ENCODE measurements at regions of chr1 and their contacts with region 1.

Region 1: GRCh38 chr1:39196244-39197215 is 8.0 kb upstream of the MACF1 start:
- DNase-seq: peak; percentile 82
- ATAC-seq: peak; percentile 47
- H3K4me3 Mint-ChIP-seq: peak overlapping the region; percentile 71
- H3K27ac Mint-ChIP-seq: peak overlapping the region; percentile 98
- H3K4me1 Mint-ChIP-seq: peaks cover 80% of the 10 kb centered on the region
- H3K27me3 Mint-ChIP-seq: no peaks in the 10 kb centered on the region

Region 2: GRCh38 chr1:39110325-39110851 is 86.1 kb before region 1 on chr1:
- CTCF ChIA-PET with region 1: interaction called, 40 read pairs
- POLR2A ChIA-PET with region 1: interaction called, 5 read pairs
- DNase-seq: no peak
- ATAC-seq: no peak
- H3K4me3 Mint-ChIP-seq: no peak overlapping the region
- H3K27ac Mint-ChIP-seq: no peak overlapping the region
- H3K4me1 Mint-ChIP-seq: no peaks in the 10 kb centered on the region
- H3K27me3 Mint-ChIP-seq: peaks cover 2% of the 10 kb centered on the region

Region 3: DNA sequence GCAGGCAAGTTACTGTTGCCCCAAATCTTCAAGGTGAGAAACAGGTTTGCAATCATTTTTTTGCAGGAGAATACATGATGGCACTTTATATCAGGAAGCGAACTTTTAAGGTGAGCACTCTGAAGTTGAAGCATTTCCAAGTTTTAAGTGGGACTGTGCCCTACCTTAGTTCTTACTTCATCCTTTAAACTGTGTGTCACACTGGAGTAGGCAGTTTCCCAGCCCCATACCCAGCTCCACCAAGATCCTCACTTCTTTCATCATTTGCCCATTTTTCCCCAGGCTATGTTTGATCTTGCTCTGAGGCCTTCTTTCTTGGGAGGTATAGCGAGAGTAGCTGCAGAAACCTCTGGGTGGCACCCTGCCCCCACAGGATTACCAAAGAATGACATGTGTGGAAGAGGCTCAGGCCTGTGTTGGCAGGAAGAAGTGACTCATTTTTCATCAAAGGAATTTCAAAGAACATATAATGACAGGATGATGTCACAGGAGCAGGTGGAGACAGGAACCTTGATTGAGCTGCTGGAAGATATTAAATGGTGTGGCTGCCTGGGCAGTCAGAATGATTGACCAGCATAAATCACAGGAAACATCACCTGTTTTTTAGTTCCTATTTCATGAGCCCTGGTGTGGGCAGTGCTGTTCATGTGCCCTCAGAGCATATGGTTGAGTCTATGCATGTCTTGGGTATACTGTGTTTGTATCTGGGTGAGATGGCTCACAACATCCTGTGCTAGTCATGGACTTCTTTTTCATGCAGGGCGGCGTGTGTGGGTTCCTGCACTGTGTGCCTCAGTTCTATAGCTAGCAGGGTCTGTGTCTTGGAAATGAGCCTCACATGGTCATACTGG is 12.8 kb before region 1 on chr1:
- CTCF ChIA-PET with region 1: interaction called, 92 read pairs
- POLR2A ChIA-PET with region 1: interaction called, 6 read pairs
- DNase-seq: peak; percentile 89
- ATAC-seq: peak; percentile 90
- H3K4me3 Mint-ChIP-seq: peak overlapping the region; percentile 1
- H3K27ac Mint-ChIP-seq: peak overlapping the region; percentile 84
- H3K4me1 Mint-ChIP-seq: peaks cover 45% of the 10 kb centered on the region
- H3K27me3 Mint-ChIP-seq: no peaks in the 10 kb centered on the region

Region 4: DNA sequence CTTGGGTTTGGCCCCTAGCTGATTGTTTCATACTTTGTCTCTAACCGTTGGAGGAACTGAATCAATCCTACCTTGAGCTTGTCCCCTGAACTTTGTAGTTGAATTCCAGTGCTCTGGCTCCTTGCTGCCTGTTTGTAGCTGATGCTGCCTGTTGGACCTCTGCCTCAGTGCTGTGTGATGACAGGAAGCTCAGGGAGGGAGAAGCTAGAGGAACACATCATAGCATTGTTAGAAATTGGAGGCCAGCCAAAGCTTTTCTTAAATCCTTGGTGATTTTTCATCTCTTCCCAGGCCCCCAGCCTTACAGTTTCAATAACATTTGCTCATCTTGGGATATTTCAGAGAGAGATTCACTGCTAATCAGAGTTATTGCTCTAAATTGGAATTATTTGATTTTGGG is 41.9 kb after region 1 on chr1:
- CTCF ChIA-PET with region 1: interaction called, 50 read pairs
- POLR2A ChIA-PET with region 1: no interaction called
- DNase-seq: no peak
- ATAC-seq: no peak
- H3K4me3 Mint-ChIP-seq: no peak overlapping the region
- H3K27ac Mint-ChIP-seq: peak overlapping the region; percentile 75
- H3K4me1 Mint-ChIP-seq: peaks cover 8% of the 10 kb centered on the region
- H3K27me3 Mint-ChIP-seq: no peaks in the 10 kb centered on the region

Region 5: DNA sequence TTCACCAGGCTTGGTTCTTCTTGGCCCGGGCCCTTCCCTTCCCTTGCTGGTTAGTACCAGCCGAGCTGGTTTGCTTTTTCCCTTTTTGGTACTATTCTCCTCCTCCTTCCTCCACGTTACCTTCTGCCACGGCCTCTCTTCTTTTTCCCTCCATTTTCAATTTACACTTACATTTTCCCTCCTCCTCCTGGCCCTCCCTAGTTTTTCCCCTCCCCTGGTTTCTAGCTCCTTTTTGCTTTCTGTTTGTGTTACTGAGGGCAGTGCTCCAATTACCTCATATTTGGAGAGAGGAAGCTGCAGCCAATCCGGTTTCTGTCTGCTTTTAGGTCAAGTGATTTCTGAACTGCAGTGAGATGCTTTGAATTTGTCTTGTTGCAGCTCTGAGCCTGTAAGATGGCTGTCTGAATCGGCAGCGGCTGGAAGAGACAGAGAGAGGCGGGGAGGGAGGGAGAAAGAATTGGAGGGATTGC is 71.6 kb after region 1 on chr1:
- CTCF ChIA-PET with region 1: interaction called, 517 read pairs
- POLR2A ChIA-PET with region 1: interaction called, 3 read pairs
- DNase-seq: no peak
- ATAC-seq: no peak
- H3K4me3 Mint-ChIP-seq: peak overlapping the region; percentile 53
- H3K27ac Mint-ChIP-seq: peak overlapping the region; percentile 68
- H3K4me1 Mint-ChIP-seq: peaks cover 44% of the 10 kb centered on the region
- H3K27me3 Mint-ChIP-seq: no peaks in the 10 kb centered on the region

Region 6: GRCh38 chr1:39297551-39297950 is 101.0 kb after region 1 on chr1:
- CTCF ChIA-PET with region 1: interaction called, 23 read pairs
- POLR2A ChIA-PET with region 1: no interaction called
- DNase-seq: no peak
- ATAC-seq: no peak
- H3K4me3 Mint-ChIP-seq: no peak overlapping the region
- H3K27ac Mint-ChIP-seq: peak overlapping the region; percentile 24
- H3K4me1 Mint-ChIP-seq: no peaks in the 10 kb centered on the region
- H3K27me3 Mint-ChIP-seq: no peaks in the 10 kb centered on the region

Measured in activated CD8-positive, alpha-beta T cell treated with anti-CD3 and anti-CD28 coated beads, Interleukin-2, amount 10 ng/mL, durations not matched to agents 7 days and 5 days (primary cell).